Activated CD4-positive, alpha-beta T cell treated with anti-CD3 and anti-CD28 coated beads for 36 hours (primary cell): ENCODE measurements at regions of chr15 and their contacts with region 1.

Region 1: GRCh38 chr15:25368850-25369249 is 70.0 kb downstream of the UBE3A start:
- DNase-seq: no peak
- ATAC-seq: no peak
- H3K4me3 Mint-ChIP-seq: no peak overlapping the region
- H3K27ac Mint-ChIP-seq: no peak overlapping the region
- H3K4me1 Mint-ChIP-seq: peaks cover 16% of the 10 kb centered on the region
- H3K27me3 Mint-ChIP-seq: no peaks in the 10 kb centered on the region

Region 2: DNA sequence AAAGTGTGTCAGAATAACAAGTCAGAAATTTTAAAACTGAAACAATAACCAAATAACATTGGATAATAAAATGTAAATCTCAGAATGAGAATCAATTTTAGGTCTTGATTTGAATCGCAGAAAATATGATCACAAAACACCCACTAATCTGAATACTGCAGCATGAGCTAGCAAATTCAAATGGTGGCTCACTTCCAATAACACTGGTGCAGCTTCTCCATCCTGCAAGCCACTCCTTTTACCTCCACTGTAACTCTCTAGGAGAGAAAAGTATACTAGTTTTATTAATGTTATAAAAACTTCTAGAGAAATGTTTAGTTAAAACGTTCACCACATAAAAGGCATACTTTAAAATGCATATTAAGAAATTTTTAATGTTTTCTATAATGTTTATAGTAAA is 39.6 kb after region 1 on chr15:
- CTCF ChIA-PET with region 1: interaction called, 3 read pairs
- POLR2A ChIA-PET with region 1: interaction called, 3 read pairs
- intact Hi-C with region 1: loop called in 1 of 2 experiments (anchors 5 kb)
- DNase-seq: no peak
- ATAC-seq: no peak
- H3K4me3 Mint-ChIP-seq: no peak overlapping the region
- H3K27ac Mint-ChIP-seq: no peak overlapping the region
- H3K4me1 Mint-ChIP-seq: peaks cover 37% of the 10 kb centered on the region
- H3K27me3 Mint-ChIP-seq: no peaks in the 10 kb centered on the region

Region 3: DNA sequence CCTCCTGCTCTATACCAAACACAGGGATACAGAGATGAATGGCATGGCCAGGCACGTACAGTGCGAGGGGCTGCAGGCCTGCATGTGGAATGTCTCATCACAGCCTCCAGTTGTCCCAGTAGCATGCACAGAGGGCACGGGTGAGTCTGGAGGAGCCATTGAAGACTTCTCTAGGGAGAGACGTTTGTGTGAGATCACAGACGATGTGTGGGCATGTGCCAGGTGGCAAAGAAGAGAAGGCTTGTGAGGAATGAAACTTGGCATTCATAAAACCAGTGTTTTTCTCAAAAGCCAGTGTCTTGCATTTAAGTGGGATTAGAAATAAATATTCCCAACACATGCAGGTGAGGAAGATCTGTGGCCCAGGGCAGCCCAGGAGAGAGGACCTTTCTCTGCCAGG is 189.1 kb after region 1 on chr15:
- CTCF ChIA-PET with region 1: no interaction called
- POLR2A ChIA-PET with region 1: no interaction called
- intact Hi-C with region 1: no loop called
- DNase-seq: no peak
- ATAC-seq: no peak
- H3K4me3 Mint-ChIP-seq: no peak overlapping the region
- H3K27ac Mint-ChIP-seq: no peak overlapping the region
- H3K4me1 Mint-ChIP-seq: no peaks in the 10 kb centered on the region
- H3K27me3 Mint-ChIP-seq: no peaks in the 10 kb centered on the region